ENCODE measurements at regions of chr9 and their contacts with region 1.

Region 1: DNA sequence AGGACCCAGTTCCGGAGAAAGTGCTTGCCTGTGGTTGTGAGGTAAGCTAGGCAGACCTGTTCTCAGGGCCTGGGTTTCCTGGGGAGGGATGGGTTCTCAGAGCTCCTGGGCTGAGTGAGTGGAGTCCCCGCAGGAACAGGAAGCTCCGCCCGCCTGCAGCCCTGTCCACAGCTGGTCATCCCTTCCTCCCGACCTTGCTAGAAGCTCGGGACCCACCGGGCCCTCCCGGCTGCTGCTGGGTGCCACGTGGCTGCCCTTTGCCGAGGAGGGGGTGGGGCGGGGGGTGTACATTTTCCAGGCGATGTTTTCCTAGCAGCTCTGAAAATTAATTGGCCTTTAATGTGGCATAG is 198.1 kb downstream of the C9orf50 start:
- DNase-seq: peak; percentile 63
- ATAC-seq: no peak

Region 2: GRCh38 chr9:129270903-129271431 is 151.9 kb before region 1 on chr9:
- intact Hi-C with region 1: no loop called
- DNase-seq: no peak
- ATAC-seq: no peak

Region 3: GRCh38 chr9:129398936-129399633 is 23.7 kb before region 1 on chr9:
- intact Hi-C with region 1: loop called (anchors 2 kb)
- DNase-seq: no peak
- ATAC-seq: no peak